Head of caudate nucleus (tissue), 42 donors: ENCODE measurements at regions of chr2 and their contacts with region 1.

Region 1: DNA sequence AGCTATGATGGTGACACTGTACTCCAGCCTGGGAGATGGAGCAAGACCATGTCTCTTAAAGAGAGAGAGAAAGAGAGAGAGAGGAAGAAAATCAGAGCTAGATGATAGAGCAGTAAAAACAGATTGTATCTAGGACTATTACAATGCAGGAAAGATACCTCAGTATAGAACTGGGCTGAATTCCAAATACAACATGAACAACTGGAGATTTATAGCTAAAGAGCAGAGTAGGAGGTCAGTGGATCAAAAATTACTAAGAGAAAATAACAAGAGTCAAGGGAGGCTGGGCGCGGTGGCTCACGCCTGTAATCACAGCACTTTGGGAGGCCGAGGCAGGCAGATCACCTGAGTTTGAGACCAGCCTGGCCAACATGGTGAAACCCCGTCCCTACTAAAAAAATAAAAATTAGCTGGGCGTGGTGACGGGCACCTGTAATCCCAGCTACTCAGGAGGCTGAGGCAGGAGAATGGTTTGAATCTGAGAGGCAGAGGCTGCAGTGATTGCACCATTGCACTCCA is 100.7 kb upstream of the MSH6 start:
- DNase-seq: no peak

Region 2: DNA sequence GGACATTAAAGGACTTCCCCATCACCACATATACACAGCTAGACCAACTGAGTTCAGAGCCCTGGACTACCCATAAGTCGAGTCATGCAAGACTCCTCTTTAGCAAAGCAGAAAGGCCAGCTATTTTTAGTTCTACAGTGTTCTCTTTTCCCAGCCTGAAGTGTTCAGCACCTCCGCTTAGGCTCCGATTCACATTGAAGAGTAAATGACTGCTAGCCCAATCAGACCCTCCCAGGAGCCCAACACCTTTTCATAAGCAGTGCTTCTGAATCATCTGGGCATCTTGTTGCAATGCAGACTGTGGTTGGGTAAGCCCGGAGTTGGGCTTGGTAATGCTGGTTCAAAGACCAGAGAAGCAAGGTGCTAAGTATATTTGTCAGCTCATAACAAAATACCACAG is 37.9 kb before region 1 on chr2:
- intact Hi-C with region 1: loop called (anchors 5 kb)
- DNase-seq: no peak

Region 3: GRCh38 chr2:47803363-47803762 is 121.1 kb after region 1 on chr2:
- intact Hi-C with region 1: no loop called
- DNase-seq: no peak

Region 4: DNA sequence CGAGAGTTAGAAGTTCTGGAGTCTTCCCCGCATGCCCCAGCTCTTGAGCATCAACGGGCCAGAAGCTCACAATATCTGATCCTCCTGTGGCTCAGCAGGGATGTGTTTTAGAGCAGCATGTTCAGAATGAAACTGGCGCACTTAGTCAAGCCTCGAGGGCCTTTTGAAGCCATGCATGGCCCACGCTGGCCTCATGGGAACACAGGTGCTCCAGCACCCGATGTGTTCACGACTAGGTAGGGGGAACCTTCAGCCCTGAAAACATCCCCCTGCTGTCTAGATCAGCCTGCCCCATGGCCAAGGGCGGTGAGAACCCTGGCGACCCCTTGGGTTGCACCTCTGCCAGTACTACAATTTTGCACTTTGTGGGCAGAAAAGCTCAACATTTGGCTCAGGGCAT is 133.5 kb after region 1 on chr2:
- intact Hi-C with region 1: no loop called
- DNase-seq: no peak